Dorsolateral prefrontal cortex (tissue), 120 donors: ENCODE measurements at regions of chr3 and their contacts with region 1.

Region 1: GRCh38 chr3:196632046-196632751 is 7.3 kb upstream of the NRROS start:
- DNase-seq: peak; percentile 64 to 85 (median 76)
- H3K4me3 ChIP-seq: peak overlapping the region; percentile 51 to 88 (median 74)
- H3K27ac ChIP-seq: peak overlapping the region in 58 of 59 donors; percentile 55 to 95 (median 86)
- H3K27me3 ChIP-seq: no peaks in the 10 kb centered on the region
- CTCF ChIP-seq: peak in 53 of 56 donors; percentile 12 to 74 (median 46)

Region 2: DNA sequence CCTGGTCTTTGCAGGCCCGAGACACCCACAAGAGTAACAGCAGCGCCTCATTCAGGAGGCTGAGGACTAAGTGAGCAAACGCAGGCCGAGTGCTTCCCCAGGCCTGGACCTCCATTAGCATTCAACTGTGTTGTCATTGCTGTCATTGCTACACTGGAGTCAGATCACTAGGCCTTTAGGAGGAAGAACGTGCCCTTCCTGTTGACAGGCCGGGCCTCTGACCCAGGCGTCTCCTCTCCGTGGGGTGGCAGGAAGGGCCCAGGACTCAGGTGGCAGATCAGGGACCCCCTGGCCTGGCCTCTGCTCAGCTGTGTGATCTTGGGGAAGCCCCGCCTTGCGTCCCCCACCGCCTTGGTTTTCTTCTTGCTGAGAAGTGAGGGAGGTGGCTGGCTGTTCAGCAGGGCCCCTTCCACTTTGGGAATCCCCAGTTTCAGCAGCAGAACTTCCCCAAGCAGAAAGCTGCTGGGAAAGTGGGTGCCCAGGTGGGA is 440.1 kb before region 1 on chr3:
- intact Hi-C with region 1: no loop called
- DNase-seq: no peak
- H3K4me3 ChIP-seq: no peak overlapping the region
- H3K27ac ChIP-seq: peak overlapping the region in 34 of 59 donors; percentile 1 to 84 (median 43)
- H3K27me3 ChIP-seq: no peaks in the 10 kb centered on the region
- CTCF ChIP-seq: no peak

Region 3: GRCh38 chr3:196568246-196569002 is 63.8 kb before region 1 on chr3 and contains the starts of genes FBXO45 and WDR53:
- intact Hi-C with region 1: loop called in 1 of 2 experiments (anchors 2 kb)
- DNase-seq: peak; percentile 85 to 96 (median 93)
- H3K4me3 ChIP-seq: peak within 1 kb of the TSS; percentile 63 to 100 (median 94)
- H3K27ac ChIP-seq: peak within 1 kb of the TSS in 56 of 59 donors; percentile 10 to 91 (median 77)
- H3K27me3 ChIP-seq: no peaks in the 10 kb centered on the region
- CTCF ChIP-seq: peak in 43 of 56 donors; percentile 7 to 65 (median 38)
- total RNA-seq, gene FBXO45: 12.3 to 28.8 (median 20.8) TPM
- total RNA-seq, gene WDR53: 6.0 to 19.1 (median 12.3) TPM

Region 4: DNA sequence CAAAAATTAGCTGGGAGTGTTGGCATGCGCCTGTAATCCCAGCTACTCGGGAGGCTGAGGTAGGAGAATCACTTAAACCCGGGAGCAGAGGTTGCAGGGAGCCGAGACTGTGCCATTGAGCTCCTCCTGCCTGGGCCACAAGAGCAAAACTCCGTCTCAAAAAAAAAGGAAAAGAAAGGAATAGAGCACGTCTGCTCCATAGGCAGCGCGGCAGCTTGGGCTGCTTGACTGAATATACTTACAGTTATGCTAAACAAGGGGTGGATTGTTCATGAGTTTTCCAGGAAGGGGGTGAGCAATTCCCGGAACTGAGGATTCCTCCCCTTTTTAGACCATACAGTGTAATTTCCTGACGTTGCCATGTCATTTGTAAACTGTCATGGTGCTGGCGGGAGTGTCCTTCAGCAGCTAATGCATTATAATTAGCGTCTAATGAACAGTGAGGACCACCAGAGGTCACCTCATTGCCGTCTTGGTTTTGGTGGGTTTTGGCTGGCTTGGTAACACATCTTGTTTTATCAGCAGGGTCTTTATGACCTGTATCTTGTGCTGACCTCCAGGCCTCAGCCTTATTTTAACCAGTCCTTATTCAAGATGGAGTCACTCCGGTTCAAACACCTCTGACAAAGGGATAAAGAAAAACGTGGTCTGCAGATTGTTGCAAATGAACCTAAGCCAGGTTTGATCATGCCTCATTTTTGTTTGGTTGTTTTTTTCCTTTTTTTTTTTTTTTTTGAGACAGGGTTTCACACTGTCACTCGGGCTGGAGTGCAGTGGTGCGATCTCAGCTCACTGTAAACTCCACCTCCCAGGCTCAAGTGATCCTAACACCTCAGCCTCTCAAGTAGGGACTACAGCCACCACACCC is 210.6 kb after region 1 on chr3:
- intact Hi-C with region 1: no loop called
- DNase-seq: no peak
- H3K4me3 ChIP-seq: peak overlapping the region in 3 of 59 donors; percentile 14 to 42 (median 34)
- H3K27ac ChIP-seq: no peak overlapping the region
- H3K27me3 ChIP-seq: no peaks in the 10 kb centered on the region
- CTCF ChIP-seq: no peak